PC-9 (cell line): ENCODE measurements at regions of chr17 and their contacts with region 1.

Region 1: GRCh38 chr17:64385187-64386083 is 5.2 kb downstream of the PECAM1 start:
- DNase-seq: peak; percentile 88 to 94
- H3K4me3 ChIP-seq: peak overlapping the region; percentile 85
- H3K27ac ChIP-seq: peak overlapping the region; percentile 94
- H3K4me1 ChIP-seq: peaks cover 69% of the 10 kb centered on the region
- H3K27me3 ChIP-seq: no peaks in the 10 kb centered on the region
- CTCF ChIP-seq: no peak

Region 2: DNA sequence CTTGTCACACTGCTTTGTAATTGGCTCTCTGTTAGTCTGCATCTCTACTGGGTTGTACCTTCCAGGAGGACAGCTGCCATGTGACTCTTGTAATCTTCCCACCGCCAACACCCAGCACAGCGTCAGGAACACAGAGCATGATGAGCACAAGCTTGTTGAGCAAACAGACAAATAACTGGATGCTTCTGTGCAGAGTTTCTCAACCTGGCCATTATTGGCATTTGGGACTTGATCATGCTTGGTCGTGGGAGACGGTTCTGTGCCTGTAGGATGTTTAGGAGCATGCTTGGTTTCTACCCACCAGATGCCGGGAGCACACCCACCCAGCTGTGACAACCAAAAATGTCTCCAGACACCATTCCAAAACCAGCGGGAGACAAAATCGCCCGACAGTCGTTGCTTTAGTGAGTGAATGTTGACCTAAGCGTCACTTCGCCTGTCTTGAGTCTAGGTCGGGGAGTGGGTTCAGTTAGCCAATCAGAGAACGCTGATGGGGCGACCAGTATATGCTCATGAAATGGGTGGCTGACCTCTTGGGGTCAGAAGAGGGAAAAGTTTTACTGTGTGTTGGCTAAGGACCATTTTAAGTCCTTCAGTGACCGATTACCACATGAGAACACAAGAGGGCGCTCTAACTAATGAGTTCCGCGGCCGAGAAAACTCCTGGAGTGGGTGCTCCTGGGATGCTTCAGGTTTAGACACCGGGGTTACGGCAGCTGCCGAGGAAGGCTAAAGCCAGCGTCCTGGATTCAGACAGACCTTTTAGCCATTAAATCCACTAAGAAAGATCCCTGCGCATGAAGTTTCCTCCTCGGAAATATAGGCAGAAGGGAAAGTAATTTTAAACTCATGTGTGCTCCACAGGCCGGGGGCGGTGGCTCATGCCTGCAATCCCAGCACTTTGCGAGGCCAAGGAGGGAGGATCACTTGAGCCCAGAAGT is 64.6 kb before region 1 on chr17:
- CTCF ChIA-PET with region 1: interaction called, 4 read pairs
- POLR2A ChIA-PET with region 1: interaction called, 12 read pairs
- intact Hi-C with region 1: loop called (anchors 1 kb)
- DNase-seq: peak; percentile 61 to 72
- H3K4me3 ChIP-seq: no peak overlapping the region
- H3K27ac ChIP-seq: no peak overlapping the region
- H3K4me1 ChIP-seq: peaks cover 48% of the 10 kb centered on the region
- H3K27me3 ChIP-seq: no peaks in the 10 kb centered on the region
- CTCF ChIP-seq: peak; percentile 96

Region 3: DNA sequence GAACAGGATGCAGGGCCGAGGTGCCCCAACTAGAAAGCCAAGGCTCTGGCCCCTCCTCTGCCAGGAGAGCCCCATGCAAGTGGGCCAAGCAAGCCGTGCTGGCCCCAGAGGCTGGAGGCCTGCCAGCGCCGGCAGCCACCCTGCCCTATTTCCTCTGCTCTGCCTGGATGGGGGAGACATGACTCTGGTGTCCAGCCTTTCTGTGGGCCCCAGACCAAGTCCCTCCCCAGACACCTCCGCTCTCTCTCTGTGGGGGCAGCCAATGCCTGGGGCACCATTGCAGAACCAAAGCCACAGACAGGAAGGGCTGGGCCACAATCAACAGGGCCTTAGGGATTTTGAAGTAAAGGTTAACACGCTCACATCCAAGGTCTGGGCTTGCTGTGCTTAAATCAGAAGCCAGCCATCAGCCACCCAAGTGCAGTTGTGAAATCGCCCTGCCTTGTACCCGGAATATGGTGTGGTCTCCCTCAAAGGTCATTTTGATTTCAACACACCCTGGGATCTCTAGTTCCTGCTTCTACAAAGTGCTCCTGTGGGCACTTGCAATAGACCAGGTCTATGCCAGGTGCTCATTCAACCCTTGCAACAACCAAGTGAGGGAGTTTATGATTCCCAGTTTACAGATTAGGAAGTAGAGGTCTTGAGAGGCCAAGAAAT is 58.9 kb before region 1 on chr17:
- CTCF ChIA-PET with region 1: no interaction called
- POLR2A ChIA-PET with region 1: interaction called, 5 read pairs
- intact Hi-C with region 1: loop called (anchors 1 kb)
- DNase-seq: peak; percentile 97 to 100
- H3K4me3 ChIP-seq: no peak overlapping the region
- H3K27ac ChIP-seq: peak overlapping the region; percentile 99
- H3K4me1 ChIP-seq: peaks cover 89% of the 10 kb centered on the region
- H3K27me3 ChIP-seq: no peaks in the 10 kb centered on the region
- CTCF ChIP-seq: no peak

Region 4: GRCh38 chr17:64331946-64332493 is 53.4 kb before region 1 on chr17:
- CTCF ChIA-PET with region 1: interaction called, 18 read pairs
- POLR2A ChIA-PET with region 1: interaction called, 8 read pairs
- intact Hi-C with region 1: loop called (anchors 1 kb)
- DNase-seq: peak; percentile 87 to 96
- H3K4me3 ChIP-seq: peak overlapping the region; percentile 70; the same call in 1 of the 2 replicates
- H3K27ac ChIP-seq: peak overlapping the region; percentile 99
- H3K4me1 ChIP-seq: peaks cover 95% of the 10 kb centered on the region
- H3K27me3 ChIP-seq: no peaks in the 10 kb centered on the region
- CTCF ChIP-seq: no peak

Region 5: DNA sequence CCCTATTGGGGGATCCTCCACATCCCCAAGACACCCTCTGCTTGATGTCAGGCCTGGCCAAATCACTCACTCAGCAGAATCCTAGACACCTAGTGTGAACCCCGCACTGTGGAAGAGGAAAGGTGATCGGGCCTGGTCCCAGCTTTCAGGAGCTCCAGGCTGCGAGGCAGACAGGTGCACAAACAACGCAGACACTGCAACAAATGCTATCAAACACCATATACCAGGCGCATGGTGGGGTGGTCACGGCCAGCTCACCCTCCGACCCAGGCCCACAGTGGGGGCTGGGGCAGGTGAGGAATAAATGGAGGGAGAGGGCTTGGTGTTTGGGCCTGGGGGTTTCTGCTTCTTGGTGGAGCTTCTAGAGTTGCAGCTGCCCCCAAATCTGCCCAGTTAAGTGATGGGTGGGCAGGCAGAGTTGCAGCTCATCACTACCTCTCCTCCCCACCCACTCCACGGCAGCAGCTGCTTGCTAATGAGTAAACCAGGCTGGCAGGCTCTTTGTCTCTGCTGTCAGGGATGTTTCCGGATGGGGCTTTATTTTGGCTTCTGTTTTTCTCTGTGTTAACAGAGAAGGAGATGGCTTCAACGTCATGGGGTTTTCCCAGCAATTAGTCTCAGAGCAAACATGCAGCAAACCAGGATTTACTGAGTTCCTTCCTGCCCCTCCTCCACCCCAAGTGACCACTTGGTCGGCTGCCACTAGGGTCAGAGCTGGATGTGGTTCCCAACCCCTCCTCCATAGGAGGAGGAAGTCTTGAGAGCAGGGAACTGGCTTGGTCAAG is 41.4 kb before region 1 on chr17:
- CTCF ChIA-PET with region 1: no interaction called
- POLR2A ChIA-PET with region 1: no interaction called
- intact Hi-C with region 1: loop called (anchors 1 kb)
- DNase-seq: peak; percentile 80 to 97
- H3K4me3 ChIP-seq: no peak overlapping the region
- H3K27ac ChIP-seq: peak overlapping the region; percentile 79
- H3K4me1 ChIP-seq: peaks cover 41% of the 10 kb centered on the region
- H3K27me3 ChIP-seq: no peaks in the 10 kb centered on the region
- CTCF ChIP-seq: no peak

Region 6: GRCh38 chr17:64399071-64399766 is 13.8 kb after region 1 on chr17:
- CTCF ChIA-PET with region 1: no interaction called
- POLR2A ChIA-PET with region 1: interaction called, 17 read pairs
- intact Hi-C with region 1: no loop called
- DNase-seq: peak; percentile 61 to 77
- H3K4me3 ChIP-seq: no peak overlapping the region
- H3K27ac ChIP-seq: no peak overlapping the region
- H3K4me1 ChIP-seq: peaks cover 57% of the 10 kb centered on the region
- H3K27me3 ChIP-seq: no peaks in the 10 kb centered on the region
- CTCF ChIP-seq: no peak

Region 7: GRCh38 chr17:64599187-64599676 is 213.8 kb after region 1 on chr17:
- CTCF ChIA-PET with region 1: no interaction called
- POLR2A ChIA-PET with region 1: no interaction called
- intact Hi-C with region 1: no loop called
- DNase-seq: no peak
- H3K4me3 ChIP-seq: no peak overlapping the region
- H3K27ac ChIP-seq: no peak overlapping the region
- H3K4me1 ChIP-seq: no peaks in the 10 kb centered on the region
- H3K27me3 ChIP-seq: no peaks in the 10 kb centered on the region
- CTCF ChIP-seq: no peak

Region 8: DNA sequence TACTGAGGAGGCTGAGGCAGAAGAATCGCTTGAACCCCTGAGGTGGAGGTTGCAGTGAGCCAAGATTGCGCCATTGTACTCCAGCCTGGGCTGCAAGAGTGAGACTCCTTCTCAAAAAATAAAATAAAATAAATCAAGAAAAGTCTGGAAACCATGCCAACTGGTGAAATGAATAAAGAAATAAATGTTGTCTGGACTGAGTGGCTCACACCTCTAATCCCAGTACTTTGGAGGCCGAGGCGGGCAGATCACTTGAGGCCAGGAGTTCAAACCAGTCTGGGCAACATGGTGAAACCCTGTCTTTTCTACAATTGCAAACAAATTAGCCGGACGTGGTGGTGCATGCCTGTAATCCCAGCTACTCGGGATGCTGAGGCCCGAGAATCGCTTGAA is 534.6 kb after region 1 on chr17:
- CTCF ChIA-PET with region 1: no interaction called
- POLR2A ChIA-PET with region 1: interaction called, 10 read pairs
- intact Hi-C with region 1: no loop called
- DNase-seq: no peak
- H3K4me3 ChIP-seq: peak overlapping the region; percentile 62
- H3K27ac ChIP-seq: peak overlapping the region; percentile 56; the same call in 1 of the 2 replicates
- H3K4me1 ChIP-seq: peaks cover 8% of the 10 kb centered on the region
- H3K27me3 ChIP-seq: no peaks in the 10 kb centered on the region
- CTCF ChIP-seq: no peak